ENCODE measurements at regions of chr17 and their contacts with region 1.

Region 1: GRCh38 chr17:8409966-8410864 is 12.6 kb upstream of the RNF222 start:
- DNase-seq: peak; percentile 89
- H3K4me3 ChIP-seq: peak overlapping the region; percentile 2 to 30 (median 24)
- H3K27ac ChIP-seq: peak overlapping the region; percentile 31
- H3K4me1 ChIP-seq: peaks cover 16% of the 10 kb centered on the region
- H3K27me3 ChIP-seq: no peaks in the 10 kb centered on the region
- CTCF ChIP-seq: peak; percentile 81 to 87

Region 2: GRCh38 chr17:8376271-8377067 is 33.7 kb before region 1 on chr17 and contains the start of gene KRABD2:
- CTCF ChIA-PET with region 1: interaction called, 10 read pairs
- dilution Hi-C with region 1: no loop called
- in situ Hi-C with region 1: no loop called
- intact Hi-C with region 1: no loop called
- DNase-seq: peak; percentile 75
- H3K4me3 ChIP-seq: peak within 1 kb of the TSS; percentile 52 to 82 (median 53)
- H3K27ac ChIP-seq: no peak within 1 kb of the TSS
- H3K4me1 ChIP-seq: peaks cover 32% of the 10 kb centered on the region
- H3K27me3 ChIP-seq: no peaks in the 10 kb centered on the region
- CTCF ChIP-seq: peak; percentile 43 to 66

Region 3: GRCh38 chr17:8435245-8436168 is 25.3 kb after region 1 on chr17 and contains the start of gene NDEL1:
- CTCF ChIA-PET with region 1: interaction called, 6 read pairs
- dilution Hi-C with region 1: no loop called
- in situ Hi-C with region 1: no loop called
- intact Hi-C with region 1: loop called (anchors 1 kb)
- DNase-seq: peak; percentile 98
- H3K4me3 ChIP-seq: peak within 1 kb of the TSS; percentile 73 to 84 (median 82)
- H3K27ac ChIP-seq: peak within 1 kb of the TSS; percentile 99
- H3K4me1 ChIP-seq: peaks cover 15% of the 10 kb centered on the region
- H3K27me3 ChIP-seq: no peaks in the 10 kb centered on the region
- CTCF ChIP-seq: no peak
- total RNA-seq, gene NDEL1: 55.7 to 102 TPM

Region 4: GRCh38 chr17:8445536-8445935 is 35.3 kb after region 1 on chr17:
- CTCF ChIA-PET with region 1: no interaction called
- dilution Hi-C with region 1: no loop called
- in situ Hi-C with region 1: no loop called
- intact Hi-C with region 1: no loop called
- DNase-seq: no peak
- H3K4me3 ChIP-seq: no peak overlapping the region
- H3K27ac ChIP-seq: no peak overlapping the region
- H3K4me1 ChIP-seq: peaks cover 4% of the 10 kb centered on the region
- H3K27me3 ChIP-seq: no peaks in the 10 kb centered on the region
- CTCF ChIP-seq: no peak

Region 5: DNA sequence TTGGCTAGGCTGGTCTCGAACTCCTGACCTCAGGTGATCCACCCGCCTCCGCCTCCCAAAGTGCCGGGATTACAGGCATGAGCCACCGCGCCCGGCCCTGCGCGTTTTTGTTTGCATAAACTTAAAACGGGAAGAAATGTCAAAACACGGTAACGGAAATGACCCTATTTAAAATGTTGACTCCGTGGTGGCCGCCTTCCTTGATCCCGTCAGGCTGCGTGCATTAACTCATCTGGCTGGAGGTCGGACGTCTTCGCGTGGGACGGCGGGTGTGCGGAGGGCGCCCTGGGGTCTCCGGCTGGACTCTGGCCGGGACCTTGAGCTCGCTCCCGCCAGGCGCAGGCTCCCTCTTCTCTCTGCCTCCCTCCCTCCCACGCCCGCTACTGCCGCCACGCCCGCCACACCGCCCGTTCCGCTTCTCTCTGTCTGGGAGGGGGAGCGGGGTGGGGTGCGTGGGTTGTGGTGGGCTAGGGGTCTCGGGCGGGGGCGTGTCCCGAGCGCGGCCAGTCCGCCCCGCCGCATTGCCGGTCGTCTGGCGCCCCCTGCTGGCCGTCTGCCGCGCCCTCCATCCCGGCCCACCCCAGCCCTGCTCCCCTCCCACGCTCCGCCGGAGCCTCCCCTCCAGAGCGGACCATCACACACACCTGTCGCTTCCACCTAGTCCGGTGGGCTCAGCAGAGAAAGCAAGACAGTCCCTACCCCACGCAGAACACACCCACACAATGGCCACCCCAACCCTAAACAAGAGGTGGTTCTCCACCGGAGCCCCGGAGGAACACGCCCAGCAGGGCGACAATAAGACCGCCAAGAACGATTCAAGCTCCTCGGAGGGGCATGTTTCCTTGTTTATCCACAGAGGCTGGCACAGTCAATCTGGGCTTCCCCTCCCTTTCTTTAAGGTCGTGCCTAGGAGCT is 335.6 kb after region 1 on chr17:
- CTCF ChIA-PET with region 1: interaction called, 5 read pairs
- dilution Hi-C with region 1: no loop called
- in situ Hi-C with region 1: no loop called
- intact Hi-C with region 1: loop called (anchors 1 kb)
- DNase-seq: peak; percentile 22
- H3K4me3 ChIP-seq: peak overlapping the region; percentile 47 to 65 (median 56)
- H3K27ac ChIP-seq: no peak overlapping the region
- H3K4me1 ChIP-seq: peaks cover 5% of the 10 kb centered on the region
- H3K27me3 ChIP-seq: no peaks in the 10 kb centered on the region
- CTCF ChIP-seq: peak; percentile 25 to 82